ENCODE measurements at regions of chr2 and their contacts with region 1.

Region 1: DNA sequence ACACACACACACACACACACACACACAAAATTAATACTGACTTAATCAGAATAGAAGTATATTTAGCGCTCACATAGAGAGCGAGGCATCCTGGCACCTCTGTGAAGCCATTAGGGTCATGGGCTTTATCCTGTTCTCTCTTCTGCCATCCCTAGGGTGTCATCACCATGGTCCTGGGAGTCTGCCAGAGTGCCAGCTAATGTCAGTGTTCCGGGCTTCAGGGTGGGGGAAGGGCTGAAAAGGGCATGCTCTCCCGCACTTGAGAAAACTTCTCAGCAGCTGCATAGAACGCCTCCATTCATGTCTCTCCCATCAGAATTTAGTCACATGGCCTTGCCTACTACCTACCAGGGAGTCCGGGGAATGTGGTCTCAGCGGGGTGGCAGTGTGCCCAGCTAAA is 19.7 kb upstream of the DYNC2LI1 start:
- DNase-seq: no peak
- H3K4me3 ChIP-seq: no peak overlapping the region
- H3K27ac ChIP-seq: no peak overlapping the region
- H3K4me1 ChIP-seq: no peaks in the 10 kb centered on the region
- H3K27me3 ChIP-seq: no peaks in the 10 kb centered on the region
- CTCF ChIP-seq: no peak
- POLR2A ChIP-seq: no peak

Region 2: DNA sequence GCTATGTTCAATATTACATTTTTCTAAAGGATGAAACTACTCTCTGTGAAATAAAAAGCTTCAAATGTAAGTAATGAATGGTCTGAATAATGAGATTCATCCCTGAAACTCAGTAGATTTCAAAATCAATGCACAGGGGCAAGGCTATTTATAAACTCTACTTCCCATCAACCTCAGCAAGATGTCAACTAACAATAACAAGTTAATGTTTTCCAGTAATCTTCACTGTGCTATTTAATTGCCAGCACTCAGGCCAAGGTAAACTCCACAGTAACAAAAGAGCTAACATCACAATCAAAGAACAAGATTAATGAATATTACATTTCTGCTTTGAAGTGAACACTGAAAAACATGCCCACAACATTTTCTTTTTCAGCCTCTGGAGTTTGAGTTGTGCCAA is 383.5 kb before region 1 on chr2:
- intact Hi-C with region 1: no loop called
- DNase-seq: no peak
- H3K4me3 ChIP-seq: no peak overlapping the region
- H3K27ac ChIP-seq: peak overlapping the region; percentile 4 to 47
- H3K4me1 ChIP-seq: no peaks in the 10 kb centered on the region
- H3K27me3 ChIP-seq: no peaks in the 10 kb centered on the region
- CTCF ChIP-seq: no peak
- POLR2A ChIP-seq: no peak

Region 3: GRCh38 chr2:43701111-43701510 is 53.1 kb before region 1 on chr2:
- intact Hi-C with region 1: loop called (anchors 2 kb)
- DNase-seq: no peak
- H3K4me3 ChIP-seq: no peak overlapping the region
- H3K27ac ChIP-seq: no peak overlapping the region
- H3K4me1 ChIP-seq: no peaks in the 10 kb centered on the region
- H3K27me3 ChIP-seq: no peaks in the 10 kb centered on the region
- CTCF ChIP-seq: no peak
- POLR2A ChIP-seq: no peak

Region 4: GRCh38 chr2:43773876-43774613 is 19.9 kb after region 1 on chr2 and contains the start of gene DYNC2LI1:
- intact Hi-C with region 1: no loop called
- DNase-seq: peak; percentile 83 to 86
- H3K4me3 ChIP-seq: peak within 1 kb of the TSS; percentile 71 to 80 (median 72)
- H3K27ac ChIP-seq: peak within 1 kb of the TSS; percentile 89 to 95
- H3K4me1 ChIP-seq: no peaks in the 10 kb centered on the region
- H3K27me3 ChIP-seq: no peaks in the 10 kb centered on the region
- CTCF ChIP-seq: no peak
- POLR2A ChIP-seq: peak; percentile 57
- total RNA-seq, gene DYNC2LI1: 30.9 to 52.1 (median 40.6) TPM

Measured in breast epithelium (tissue), 4 donors.